Mammary epithelial cell (primary cell): ENCODE measurements at regions of chr9 and their contacts with region 1.

Region 1: GRCh38 chr9:3181049-3181953 is 337.4 kb upstream of the PUM3 start:
- DNase-seq: peak; percentile 60
- H3K4me3 ChIP-seq: peak overlapping the region in 2 of 3 experiments; percentile 24 to 26
- H3K27ac ChIP-seq: no peak overlapping the region
- H3K4me1 ChIP-seq: no peaks in the 10 kb centered on the region
- H3K27me3 ChIP-seq: peaks cover 20% of the 10 kb centered on the region
- CTCF ChIP-seq: peak; percentile 38 to 68

Region 2: DNA sequence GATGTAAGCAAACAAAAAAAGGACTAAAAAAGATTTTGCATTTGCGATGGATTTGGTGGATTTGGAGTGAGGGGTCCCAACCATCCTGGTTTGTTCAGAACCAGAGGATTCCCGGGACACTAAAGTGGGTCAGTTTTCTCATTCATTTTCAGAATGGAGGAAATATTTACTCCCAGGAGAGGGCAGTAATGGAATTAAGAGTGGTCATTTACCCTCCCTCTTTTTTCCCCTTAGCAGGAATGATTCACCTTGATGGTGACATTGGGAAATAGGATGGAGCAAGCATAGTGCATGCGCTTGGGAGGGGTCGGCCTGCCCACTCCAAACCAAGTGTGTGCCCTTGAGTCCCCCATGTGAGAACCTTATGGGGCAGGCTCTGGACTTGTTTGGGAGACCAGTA is 173.2 kb before region 1 on chr9:
- CTCF ChIA-PET with region 1: no interaction called
- dilution Hi-C with region 1: no loop called
- in situ Hi-C with region 1: no loop called
- intact Hi-C with region 1: loop called (anchors 1 kb)
- DNase-seq: no peak
- H3K4me3 ChIP-seq: no peak overlapping the region
- H3K27ac ChIP-seq: no peak overlapping the region
- H3K4me1 ChIP-seq: no peaks in the 10 kb centered on the region
- H3K27me3 ChIP-seq: no peaks in the 10 kb centered on the region
- CTCF ChIP-seq: no peak

Region 3: DNA sequence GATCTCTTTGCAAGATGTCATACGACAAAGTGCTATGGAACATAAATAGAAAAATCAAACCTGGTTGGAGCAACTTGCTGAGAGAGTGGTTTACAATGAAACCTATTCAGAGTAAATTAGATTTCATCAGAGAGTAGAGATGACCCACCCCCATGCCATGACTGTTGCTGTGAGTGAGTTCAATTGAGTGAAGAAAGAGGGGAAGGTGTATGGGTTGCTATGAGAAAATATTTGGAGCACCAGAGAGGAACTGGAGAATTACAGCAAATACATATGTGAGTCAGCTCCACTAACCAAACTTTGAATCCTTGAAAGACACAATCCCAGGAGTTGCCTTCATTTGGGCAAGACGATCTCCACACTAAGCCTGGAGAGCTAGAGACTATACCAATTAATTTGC is 127.3 kb after region 1 on chr9:
- CTCF ChIA-PET with region 1: no interaction called
- dilution Hi-C with region 1: no loop called
- in situ Hi-C with region 1: no loop called
- intact Hi-C with region 1: no loop called
- DNase-seq: no peak
- H3K4me3 ChIP-seq: no peak overlapping the region
- H3K27ac ChIP-seq: no peak overlapping the region
- H3K4me1 ChIP-seq: no peaks in the 10 kb centered on the region
- H3K27me3 ChIP-seq: no peaks in the 10 kb centered on the region
- CTCF ChIP-seq: no peak

Region 4: DNA sequence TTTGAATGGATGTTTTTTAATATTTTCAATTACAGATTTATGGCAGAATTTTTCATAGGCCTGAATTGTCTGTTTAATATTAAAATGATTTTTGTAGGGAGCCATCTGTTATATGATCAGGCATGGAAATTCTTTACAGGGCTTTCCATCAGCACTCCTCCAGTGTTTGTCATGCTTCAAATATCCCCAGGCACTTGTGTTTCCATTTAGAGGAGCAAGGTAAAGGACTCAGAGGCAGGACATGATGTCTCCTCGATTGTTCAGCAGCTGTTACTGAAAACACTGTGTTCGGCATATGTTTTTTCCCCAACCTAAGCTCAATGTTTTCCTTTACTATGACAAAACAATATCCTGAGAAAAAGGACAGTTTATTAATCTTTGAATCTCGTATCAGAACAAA is 516.8 kb after region 1 on chr9:
- CTCF ChIA-PET with region 1: no interaction called
- dilution Hi-C with region 1: no loop called
- in situ Hi-C with region 1: no loop called
- intact Hi-C with region 1: no loop called
- DNase-seq: no peak
- H3K4me3 ChIP-seq: no peak overlapping the region
- H3K27ac ChIP-seq: no peak overlapping the region
- H3K4me1 ChIP-seq: no peaks in the 10 kb centered on the region
- H3K27me3 ChIP-seq: peaks cover 4% of the 10 kb centered on the region
- CTCF ChIP-seq: no peak